Sigmoid colon (tissue), 7 donors: ENCODE measurements at regions of chr11 and their contacts with region 1.

Region 1: DNA sequence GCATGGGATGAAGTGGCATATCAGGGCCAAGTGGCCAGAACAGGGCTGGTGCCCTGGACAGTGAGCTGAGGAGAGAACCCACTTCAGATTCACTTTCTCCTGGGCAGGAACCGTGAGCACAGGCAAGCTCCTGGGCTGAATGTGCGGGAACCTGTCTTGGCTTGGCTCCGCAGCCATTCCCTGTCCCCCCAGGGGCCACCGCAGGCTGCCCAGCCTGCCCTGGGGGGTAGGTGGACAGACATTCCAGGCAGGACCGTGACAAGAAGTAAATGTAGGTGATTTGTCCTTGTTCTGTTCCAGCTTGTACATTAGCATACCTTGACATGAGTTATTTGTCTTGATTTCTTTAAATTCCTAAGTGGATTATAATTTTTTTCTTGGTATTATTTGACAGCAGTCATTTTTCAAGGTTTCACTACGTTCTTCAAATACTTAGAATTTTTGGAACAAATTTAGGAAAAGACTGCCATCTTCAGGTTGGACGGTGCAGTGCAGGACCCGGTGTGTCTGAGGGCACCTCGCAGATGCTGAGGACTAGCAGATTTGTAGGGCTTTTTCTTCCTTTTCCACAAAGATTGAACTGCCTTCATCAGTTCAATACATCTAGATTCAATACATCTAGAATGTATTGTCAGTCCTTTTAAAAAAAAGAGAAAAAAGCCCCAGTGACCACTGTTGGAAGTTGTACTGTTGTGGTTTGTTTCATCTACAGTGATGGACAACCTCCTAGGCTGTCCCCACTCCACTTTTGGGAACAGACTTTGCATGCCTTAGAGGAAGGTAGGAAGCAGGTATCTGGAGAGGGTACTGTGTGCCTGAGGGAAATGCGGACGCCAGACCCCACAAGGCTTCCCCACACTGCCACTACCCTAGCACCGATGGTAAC is 115.1 kb upstream of the RASSF10 start:
- DNase-seq: peak; percentile 82
- H3K4me3 ChIP-seq: no peak overlapping the region
- H3K27ac ChIP-seq: peak overlapping the region; percentile 18 to 91 (median 84)
- H3K4me1 ChIP-seq: peaks cover 0 to 74% (median 56%) of the 10 kb centered on the region in 4 donors
- H3K27me3 ChIP-seq: no peaks in the 10 kb centered on the region
- CTCF ChIP-seq: peak; percentile 90 to 93 (median 92)
- EP300 ChIP-seq: no peak
- POLR2A ChIP-seq: no peak

Region 2: DNA sequence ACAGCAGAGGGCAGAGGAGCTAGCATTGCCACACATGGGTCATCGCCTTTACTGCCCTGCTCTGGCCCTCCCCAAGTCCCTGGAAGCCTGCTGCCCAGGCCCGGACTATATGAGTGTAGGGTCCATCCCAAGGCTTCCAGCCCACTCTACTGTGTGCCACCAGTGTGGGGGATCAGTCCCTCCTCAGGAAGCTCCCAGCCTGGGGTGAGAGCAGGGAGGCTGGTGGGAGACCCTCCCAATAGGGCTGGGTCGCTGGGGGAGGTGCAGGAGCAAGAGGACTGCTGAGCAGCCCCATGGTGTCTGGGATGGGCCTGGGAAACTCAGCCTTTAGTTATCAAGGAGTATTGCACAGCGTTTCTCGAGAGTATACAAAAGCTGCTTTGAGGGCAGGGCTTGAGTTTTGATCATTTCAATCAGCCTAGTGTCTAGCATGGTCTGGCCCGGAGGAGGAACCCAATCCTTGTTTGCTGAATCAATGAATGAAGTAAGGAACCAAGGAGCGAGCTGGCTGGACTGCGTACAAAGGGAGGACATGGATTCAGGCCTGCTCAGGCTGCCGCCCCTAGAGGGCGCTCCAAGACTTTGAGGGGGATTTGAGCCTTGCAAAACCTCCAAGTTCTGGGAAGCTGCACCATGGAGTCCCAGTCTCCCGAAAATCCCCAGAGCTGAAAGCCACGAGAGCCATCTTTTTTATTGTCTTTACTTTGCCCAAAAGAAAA is 605.7 kb before region 1 on chr11:
- intact Hi-C with region 1: loop called (anchors 2 kb)
- DNase-seq: peak; percentile 94
- H3K4me3 ChIP-seq: no peak overlapping the region
- H3K27ac ChIP-seq: peak overlapping the region; percentile 88 to 99 (median 92)
- H3K4me1 ChIP-seq: peaks cover 0 to 45% (median 39%) of the 10 kb centered on the region in 4 donors
- H3K27me3 ChIP-seq: no peaks in the 10 kb centered on the region
- CTCF ChIP-seq: peak; percentile 77 to 91 (median 84)
- EP300 ChIP-seq: no peak
- POLR2A ChIP-seq: no peak

Region 3: GRCh38 chr11:12331239-12331874 is 562.7 kb before region 1 on chr11:
- intact Hi-C with region 1: loop called (anchors 2 kb)
- DNase-seq: peak; percentile 93
- H3K4me3 ChIP-seq: no peak overlapping the region
- H3K27ac ChIP-seq: peak overlapping the region; percentile 25 to 91 (median 84)
- H3K4me1 ChIP-seq: peaks cover 2 to 41% (median 34%) of the 10 kb centered on the region in 4 donors
- H3K27me3 ChIP-seq: no peaks in the 10 kb centered on the region
- CTCF ChIP-seq: peak; percentile 69 to 85 (median 76)
- EP300 ChIP-seq: no peak
- POLR2A ChIP-seq: no peak

Region 4: DNA sequence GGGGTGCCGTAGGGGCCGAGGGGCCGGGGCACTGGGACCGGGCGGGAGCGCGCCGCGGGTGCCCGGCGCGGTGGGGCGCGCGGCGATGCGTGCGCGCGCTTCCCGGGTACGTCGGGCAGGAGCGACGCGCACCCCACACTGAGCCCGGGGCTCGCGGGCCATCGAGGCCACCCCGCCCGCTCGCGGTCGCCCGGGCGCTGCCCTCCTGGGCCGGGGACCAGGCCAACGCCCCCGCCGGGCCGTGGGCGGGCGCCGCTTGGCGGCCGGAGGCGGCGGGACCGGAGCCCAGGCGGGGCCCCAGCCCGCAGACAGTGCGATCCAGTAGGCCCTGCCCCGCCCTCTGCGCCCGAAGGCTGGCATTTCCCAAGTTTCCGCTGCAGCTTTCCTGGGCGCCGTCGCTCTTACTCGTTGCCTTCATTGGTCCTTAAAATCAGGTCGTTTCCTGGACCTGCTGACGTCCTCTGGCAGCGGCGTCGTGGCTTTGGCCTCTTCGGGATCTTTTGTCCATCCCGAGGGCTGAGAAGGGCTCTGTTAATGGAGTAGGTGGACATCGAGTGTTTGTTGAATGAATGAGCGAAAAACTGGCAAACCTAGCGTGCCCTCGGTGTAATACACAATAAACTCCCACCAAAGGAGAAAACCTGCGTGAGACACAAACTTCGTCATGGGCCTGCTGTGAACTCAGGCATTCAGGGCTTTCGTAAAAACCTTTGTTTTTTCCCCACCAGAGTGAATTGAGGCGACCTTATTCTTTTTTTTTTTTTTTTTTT is 516.0 kb before region 1 on chr11:
- intact Hi-C with region 1: loop called (anchors 5 kb)
- DNase-seq: peak; percentile 94
- H3K4me3 ChIP-seq: peak overlapping the region; percentile 51 to 83 (median 72)
- H3K27ac ChIP-seq: peak overlapping the region; percentile 97 to 99 (median 98)
- H3K4me1 ChIP-seq: peaks cover 0 to 65% (median 57%) of the 10 kb centered on the region in 4 donors
- H3K27me3 ChIP-seq: no peaks in the 10 kb centered on the region
- CTCF ChIP-seq: no peak
- EP300 ChIP-seq: peak in 2 of 4 donors; percentile 58 to 86
- POLR2A ChIP-seq: peak; percentile 37 to 57

Region 5: DNA sequence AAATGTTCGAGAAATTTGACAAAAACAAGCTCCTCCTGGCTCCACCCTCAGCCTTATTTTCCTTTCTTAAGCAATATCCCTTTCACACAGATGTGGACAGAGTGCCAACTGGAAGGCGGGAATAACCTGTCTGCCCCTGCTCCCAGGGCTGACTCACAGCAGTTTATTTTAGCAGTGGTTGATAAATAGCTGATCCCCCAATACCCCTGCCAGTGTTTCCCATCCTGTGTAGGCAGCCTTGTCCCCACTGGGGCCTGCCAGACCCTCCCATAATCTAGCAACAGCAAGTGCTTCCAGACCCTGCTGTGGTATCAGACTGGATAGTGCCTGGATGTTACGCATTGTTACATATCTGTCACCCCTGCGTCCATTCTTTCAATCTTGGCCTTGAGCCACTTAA is 463.1 kb before region 1 on chr11:
- intact Hi-C with region 1: loop called (anchors 5 kb)
- DNase-seq: peak; percentile 95
- H3K4me3 ChIP-seq: no peak overlapping the region
- H3K27ac ChIP-seq: peak overlapping the region; percentile 87 to 99 (median 94)
- H3K4me1 ChIP-seq: peaks cover 0 to 96% (median 86%) of the 10 kb centered on the region in 4 donors
- H3K27me3 ChIP-seq: no peaks in the 10 kb centered on the region
- CTCF ChIP-seq: no peak
- EP300 ChIP-seq: peak in 1 of 4 donors; percentile 34
- POLR2A ChIP-seq: no peak